ENCODE measurements at regions of chr5 and their contacts with region 1.

Region 1: GRCh38 chr5:77958642-77959330 is 182.6 kb upstream of the TBCA start:
- DNase-seq: no peak
- H3K4me3 ChIP-seq: no peak overlapping the region
- H3K27ac ChIP-seq: no peak overlapping the region
- H3K4me1 ChIP-seq: no peaks in the 10 kb centered on the region
- H3K27me3 ChIP-seq: no peaks in the 10 kb centered on the region
- CTCF ChIP-seq: no peak

Region 2: DNA sequence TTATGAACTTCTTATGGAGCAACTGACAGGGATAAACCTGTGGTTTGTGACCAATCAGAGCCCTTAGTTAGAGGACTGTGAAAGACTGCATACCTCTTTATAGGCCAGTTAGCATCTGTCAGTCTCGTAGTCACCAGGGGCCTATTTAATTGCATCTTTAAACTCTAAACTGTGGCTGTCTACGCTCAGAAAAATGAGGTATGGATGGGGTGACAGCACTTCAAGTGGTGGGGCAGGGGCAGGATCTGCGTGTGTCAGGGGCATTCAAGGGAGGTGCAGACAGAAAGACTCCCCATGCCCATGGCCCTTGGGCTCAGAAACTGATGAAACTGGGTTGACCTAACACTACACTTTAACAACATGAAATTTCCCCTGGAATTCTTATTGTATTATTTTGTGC is 50.0 kb before region 1 on chr5:
- CTCF ChIA-PET with region 1: no interaction called
- POLR2A ChIA-PET with region 1: no interaction called
- intact Hi-C with region 1: no loop called
- DNase-seq: no peak
- H3K4me3 ChIP-seq: no peak overlapping the region
- H3K27ac ChIP-seq: no peak overlapping the region
- H3K4me1 ChIP-seq: no peaks in the 10 kb centered on the region
- H3K27me3 ChIP-seq: 0 out of 2 replicates have a peak, but pooled peaks cover 7% of the 10 kb centered on the region
- CTCF ChIP-seq: no peak

Region 3: GRCh38 chr5:77924081-77924480 is 34.7 kb before region 1 on chr5:
- CTCF ChIA-PET with region 1: no interaction called
- POLR2A ChIA-PET with region 1: no interaction called
- intact Hi-C with region 1: no loop called
- DNase-seq: peak in 1 of 2 experiments; percentile 1
- H3K4me3 ChIP-seq: no peak overlapping the region
- H3K27ac ChIP-seq: no peak overlapping the region
- H3K4me1 ChIP-seq: no peaks in the 10 kb centered on the region
- H3K27me3 ChIP-seq: no peaks in the 10 kb centered on the region
- CTCF ChIP-seq: no peak

Region 4: DNA sequence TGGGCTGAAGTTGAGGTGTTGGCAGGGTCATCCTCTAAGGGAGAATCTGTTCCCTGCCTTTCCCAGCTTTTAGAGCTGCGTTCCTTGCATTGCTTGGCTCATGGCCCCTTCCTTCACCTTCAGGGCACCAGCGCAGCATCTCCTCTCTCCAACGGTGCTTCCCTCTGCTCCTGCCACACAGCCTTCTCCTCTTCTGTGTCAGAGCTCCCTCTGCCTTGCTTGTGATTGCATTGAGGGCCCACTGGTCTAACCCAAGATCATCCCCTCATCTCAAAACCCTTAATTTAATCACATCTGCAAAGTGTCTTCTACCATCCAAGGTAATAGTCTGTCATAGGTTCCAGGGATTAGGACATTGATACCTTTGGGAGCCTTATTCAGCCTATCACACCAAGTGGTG is 23.0 kb after region 1 on chr5:
- CTCF ChIA-PET with region 1: no interaction called
- POLR2A ChIA-PET with region 1: interaction called, 20 read pairs
- intact Hi-C with region 1: no loop called
- DNase-seq: no peak
- H3K4me3 ChIP-seq: no peak overlapping the region
- H3K27ac ChIP-seq: no peak overlapping the region
- H3K4me1 ChIP-seq: no peaks in the 10 kb centered on the region
- H3K27me3 ChIP-seq: no peaks in the 10 kb centered on the region
- CTCF ChIP-seq: no peak

Measured in PC-9 (cell line).